ENCODE measurements at regions of chr18 and their contacts with region 1.

Region 1: GRCh38 chr18:74551936-74552555 is 17.7 kb downstream of the CNDP1 start:
- H3K4me3 Mint-ChIP-seq: no peak overlapping the region
- H3K27ac Mint-ChIP-seq: no peak overlapping the region
- H3K4me1 Mint-ChIP-seq: no peaks in the 10 kb centered on the region
- H3K27me3 Mint-ChIP-seq: peaks cover 14% of the 10 kb centered on the region

Region 2: DNA sequence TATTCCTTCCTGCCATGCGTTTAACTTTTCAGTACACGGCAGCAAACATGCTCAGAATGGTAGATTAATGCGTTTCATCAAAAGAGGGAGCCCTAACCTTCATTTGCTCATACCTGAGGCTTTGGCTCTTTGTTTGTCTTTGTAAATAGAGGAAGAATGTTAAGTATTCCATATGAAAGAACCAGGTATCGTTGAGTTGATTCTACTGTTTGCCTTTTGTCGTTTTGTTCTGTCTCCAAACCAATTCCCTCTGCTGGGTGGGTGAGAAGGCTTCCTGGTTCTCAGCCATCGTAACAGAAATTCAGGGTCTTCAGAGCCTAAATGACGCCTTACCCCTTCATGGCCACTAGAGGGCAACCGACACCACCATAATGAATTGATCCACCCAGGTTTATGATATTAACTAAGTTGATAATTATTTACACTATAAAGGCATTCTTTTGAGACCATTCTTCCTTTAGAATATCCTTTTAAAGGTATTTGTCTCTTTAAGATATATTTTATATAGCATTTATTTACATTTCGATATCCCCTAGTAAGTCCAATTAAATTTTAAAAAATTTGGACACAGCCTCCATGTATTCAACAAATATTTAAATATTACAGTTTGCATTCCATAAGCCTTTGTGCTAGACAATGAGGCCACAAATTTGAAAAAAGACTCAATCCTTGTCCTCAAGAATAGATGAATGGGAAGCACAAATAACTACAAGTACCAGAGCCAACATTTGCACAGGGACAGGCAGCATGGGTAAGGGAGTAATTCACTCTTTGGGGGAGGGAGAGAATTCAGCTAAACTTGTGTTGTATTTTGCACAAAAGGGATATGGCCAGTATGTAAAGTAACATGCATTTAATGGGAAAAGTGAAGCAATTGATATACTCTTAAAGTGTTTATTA is 355.6 kb before region 1 on chr18:
- intact Hi-C with region 1: loop called (anchors 1 kb)
- H3K4me3 Mint-ChIP-seq: peak overlapping the region; percentile 13
- H3K27ac Mint-ChIP-seq: no peak overlapping the region
- H3K4me1 Mint-ChIP-seq: peaks cover 12% of the 10 kb centered on the region
- H3K27me3 Mint-ChIP-seq: peaks cover 13% of the 10 kb centered on the region

Region 3: GRCh38 chr18:74353169-74353775 is 198.8 kb before region 1 on chr18:
- intact Hi-C with region 1: loop called (anchors 1 kb)
- H3K4me3 Mint-ChIP-seq: no peak overlapping the region
- H3K27ac Mint-ChIP-seq: no peak overlapping the region
- H3K4me1 Mint-ChIP-seq: no peaks in the 10 kb centered on the region
- H3K27me3 Mint-ChIP-seq: no peaks in the 10 kb centered on the region